Natural killer cell (primary cell): ENCODE measurements at regions of chr1 and their contacts with region 1.

Region 1: GRCh38 chr1:19240673-19241538 is 10.4 kb downstream of the EMC1 start:
- DNase-seq: peak; percentile 53 to 79
- ATAC-seq: peak; percentile 91 to 100 (median 97)
- H3K4me3 ChIP-seq: no peak overlapping the region
- H3K4me3 Mint-ChIP-seq: no peak overlapping the region
- H3K27ac ChIP-seq: no peak overlapping the region
- H3K27ac Mint-ChIP-seq: peak overlapping the region; percentile 69 to 72
- H3K4me1 ChIP-seq: no peaks in the 10 kb centered on the region
- H3K4me1 Mint-ChIP-seq: peaks cover 0 to 3% of the 10 kb centered on the region in 2 donors
- H3K27me3 ChIP-seq: no peaks in the 10 kb centered on the region
- H3K27me3 Mint-ChIP-seq: no peaks in the 10 kb centered on the region
- CTCF ChIP-seq: peak; percentile 95

Region 2: DNA sequence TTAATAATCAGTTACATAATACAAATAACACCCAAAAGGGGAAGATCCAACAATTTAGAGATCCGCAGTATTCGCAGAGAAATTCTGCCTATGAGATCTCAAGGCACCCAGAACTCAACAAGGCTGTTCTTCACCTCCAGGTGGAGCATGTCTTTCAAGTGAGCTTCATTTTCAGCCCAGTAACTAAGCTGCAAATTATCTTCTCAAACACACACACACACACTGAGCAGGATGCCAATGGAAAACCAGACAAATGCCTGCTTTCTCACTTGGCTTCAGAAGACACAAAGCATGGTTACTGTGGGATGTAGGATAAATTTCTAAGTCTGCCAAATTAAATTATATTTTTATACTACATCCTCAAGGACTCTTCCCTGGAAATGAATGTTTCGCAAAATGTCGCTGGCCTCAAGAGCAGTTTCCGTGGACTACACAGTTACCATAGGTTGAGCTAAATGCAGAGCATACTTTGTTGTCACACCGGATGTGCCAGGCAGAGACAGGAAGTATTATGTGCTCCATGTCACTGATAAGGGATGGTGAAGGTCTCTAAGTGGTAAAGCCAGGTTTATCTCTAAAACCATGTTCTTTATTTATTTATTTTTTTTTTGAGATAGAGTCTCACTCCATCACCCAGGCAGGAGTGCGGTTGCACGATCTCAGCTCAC is 61.2 kb before region 1 on chr1:
- intact Hi-C with region 1: loop called (anchors 1 kb)
- DNase-seq: peak in 1 of 2 donors; percentile 62
- ATAC-seq: peak; percentile 85 to 89 (median 87)
- H3K4me3 ChIP-seq: no peak overlapping the region
- H3K4me3 Mint-ChIP-seq: peak overlapping the region; percentile 75
- H3K27ac ChIP-seq: peak overlapping the region; percentile 62
- H3K27ac Mint-ChIP-seq: peak overlapping the region; percentile 35 to 88
- H3K4me1 ChIP-seq: peaks cover 9% of the 10 kb centered on the region
- H3K4me1 Mint-ChIP-seq: peaks cover 12 to 22% of the 10 kb centered on the region in 2 donors
- H3K27me3 ChIP-seq: no peaks in the 10 kb centered on the region
- H3K27me3 Mint-ChIP-seq: no peaks in the 10 kb centered on the region
- CTCF ChIP-seq: peak; percentile 31

Region 3: DNA sequence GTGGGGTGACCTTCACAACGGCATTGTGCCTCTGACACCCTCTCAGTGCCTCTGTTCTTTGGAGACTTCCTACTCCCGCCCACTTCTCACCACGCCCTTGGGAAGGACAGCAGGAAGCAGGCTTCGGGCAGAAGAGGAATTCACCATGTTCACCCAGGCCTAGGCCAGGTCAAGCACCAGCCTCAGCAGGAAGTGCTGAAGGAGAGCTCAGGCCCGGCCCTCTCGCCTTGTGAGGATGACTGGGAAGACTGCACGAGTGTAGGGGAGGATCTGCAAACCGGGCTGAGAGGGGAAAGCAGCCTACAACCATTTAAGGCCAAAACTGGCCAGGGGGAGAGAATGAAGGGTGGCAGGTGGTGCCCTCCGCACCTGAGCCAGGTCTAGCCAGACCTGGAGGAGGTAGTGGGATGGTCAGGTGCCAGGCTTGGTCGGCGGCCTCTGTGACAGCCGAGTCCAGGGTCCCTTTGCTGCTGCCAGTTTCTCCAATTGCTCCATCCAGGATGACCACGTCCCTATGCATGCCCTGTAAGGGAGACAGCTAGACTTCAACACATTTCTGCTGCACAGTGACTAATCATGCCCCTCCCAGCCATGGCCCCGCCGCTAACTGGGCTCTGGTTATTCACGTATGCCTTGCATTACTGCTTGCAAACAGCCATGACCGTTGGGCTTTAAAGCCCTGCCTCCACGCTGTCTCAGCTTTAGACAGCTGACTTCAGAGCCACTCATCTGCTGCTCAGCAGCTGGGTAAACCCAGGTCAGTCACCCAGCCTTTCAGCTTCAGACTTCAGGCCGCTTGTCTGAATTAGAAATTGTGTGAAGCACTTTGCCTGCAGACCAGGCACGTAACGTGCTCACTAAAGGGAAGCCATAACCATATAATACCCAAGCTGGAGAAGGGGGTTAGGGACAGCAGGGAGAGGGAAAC is 19.6 kb after region 1 on chr1:
- intact Hi-C with region 1: no loop called
- DNase-seq: no peak
- ATAC-seq: peak in 1 of 3 donors; percentile 7
- H3K4me3 ChIP-seq: no peak overlapping the region
- H3K4me3 Mint-ChIP-seq: no peak overlapping the region
- H3K27ac ChIP-seq: no peak overlapping the region
- H3K27ac Mint-ChIP-seq: no peak overlapping the region
- H3K4me1 ChIP-seq: no peaks in the 10 kb centered on the region
- H3K4me1 Mint-ChIP-seq: no peaks in the 10 kb centered on the region
- H3K27me3 ChIP-seq: no peaks in the 10 kb centered on the region
- H3K27me3 Mint-ChIP-seq: no peaks in the 10 kb centered on the region
- CTCF ChIP-seq: no peak